Right lobe of liver (tissue), 6 donors: ENCODE measurements at regions of chr9 and their contacts with region 1.

Region 1: GRCh38 chr9:105157130-105157583 is 87.3 kb upstream of the SLC44A1 start:
- DNase-seq: peak; percentile 52 to 69 (median 59)
- ATAC-seq: peak; percentile 88 to 96 (median 91)
- H3K4me3 ChIP-seq: no peak overlapping the region
- H3K27ac ChIP-seq: no peak overlapping the region
- H3K4me1 ChIP-seq: no peaks in the 10 kb centered on the region
- H3K27me3 ChIP-seq: no peaks in the 10 kb centered on the region
- CTCF ChIP-seq: peak; percentile 57 to 60 (median 58)
- POLR2A ChIP-seq: no peak

Region 2: GRCh38 chr9:104863180-104863883 is 293.8 kb before region 1 on chr9:
- intact Hi-C with region 1: loop called in 1 of 2 experiments (anchors 10 kb)
- DNase-seq: no peak
- ATAC-seq: peak; percentile 51 to 62 (median 52)
- H3K4me3 ChIP-seq: no peak overlapping the region
- H3K27ac ChIP-seq: peak overlapping the region; percentile 8 to 52 (median 45)
- H3K4me1 ChIP-seq: peaks cover 0 to 92% (median 34%) of the 10 kb centered on the region in 4 donors
- H3K27me3 ChIP-seq: no peaks in the 10 kb centered on the region
- CTCF ChIP-seq: peak; percentile 67 to 80 (median 68)
- POLR2A ChIP-seq: no peak

Region 3: GRCh38 chr9:104882086-104882485 is 275.1 kb before region 1 on chr9:
- intact Hi-C with region 1: no loop called
- DNase-seq: no peak
- ATAC-seq: no peak
- H3K4me3 ChIP-seq: no peak overlapping the region
- H3K27ac ChIP-seq: no peak overlapping the region
- H3K4me1 ChIP-seq: peaks cover 0 to 22% (median 10%) of the 10 kb centered on the region in 4 donors
- H3K27me3 ChIP-seq: no peaks in the 10 kb centered on the region
- CTCF ChIP-seq: no peak
- POLR2A ChIP-seq: no peak

Region 4: GRCh38 chr9:104934691-104935500 is 222.3 kb before region 1 on chr9:
- intact Hi-C with region 1: loop called in 1 of 2 experiments (anchors 10 kb)
- DNase-seq: no peak
- ATAC-seq: no peak
- H3K4me3 ChIP-seq: no peak overlapping the region
- H3K27ac ChIP-seq: no peak overlapping the region
- H3K4me1 ChIP-seq: peaks cover 0 to 5% (median 0%) of the 10 kb centered on the region in 4 donors
- H3K27me3 ChIP-seq: no peaks in the 10 kb centered on the region
- CTCF ChIP-seq: no peak
- POLR2A ChIP-seq: no peak

Region 5: DNA sequence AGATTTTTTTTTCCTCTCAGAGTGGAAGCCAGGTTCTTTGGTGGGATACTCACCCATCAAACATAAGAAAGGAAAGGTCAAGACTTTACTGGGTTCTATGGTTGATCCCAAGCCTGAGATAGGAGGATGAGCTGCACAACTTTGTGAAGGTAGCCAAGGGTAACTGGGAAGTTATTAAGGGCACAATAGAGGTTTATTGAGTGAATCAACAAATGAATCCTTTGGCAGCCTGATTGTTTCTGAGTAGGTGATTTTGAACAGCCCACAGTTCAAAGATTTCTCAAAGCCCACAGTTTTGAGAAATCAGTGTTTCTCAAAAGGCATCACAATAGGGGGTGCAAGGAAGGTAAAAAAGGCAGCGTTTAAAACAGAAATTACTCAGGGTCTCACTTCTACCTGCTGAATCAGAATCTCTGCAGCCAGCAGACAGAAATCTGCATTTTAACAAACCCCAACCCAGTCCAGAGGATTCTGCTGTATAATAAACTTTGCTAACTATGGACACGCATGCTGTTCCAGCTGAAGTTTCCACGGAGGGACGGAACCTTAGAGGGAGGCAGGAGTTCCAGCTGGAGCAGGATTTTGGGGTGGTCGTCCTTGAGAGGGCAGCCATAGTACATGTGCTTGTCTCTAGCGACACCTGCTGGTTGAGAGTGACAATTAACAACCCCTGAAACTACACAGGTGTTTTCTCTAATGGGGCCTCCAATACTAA is 257.9 kb after region 1 on chr9:
- intact Hi-C with region 1: loop called (anchors 5 to 10 kb)
- DNase-seq: peak in 1 of 3 donors; percentile 59
- ATAC-seq: peak; percentile 29 to 59 (median 38)
- H3K4me3 ChIP-seq: no peak overlapping the region
- H3K27ac ChIP-seq: no peak overlapping the region
- H3K4me1 ChIP-seq: peaks cover 0 to 53% (median 10%) of the 10 kb centered on the region in 4 donors
- H3K27me3 ChIP-seq: no peaks in the 10 kb centered on the region
- CTCF ChIP-seq: peak; percentile 79 to 90 (median 86)
- POLR2A ChIP-seq: no peak

Region 6: DNA sequence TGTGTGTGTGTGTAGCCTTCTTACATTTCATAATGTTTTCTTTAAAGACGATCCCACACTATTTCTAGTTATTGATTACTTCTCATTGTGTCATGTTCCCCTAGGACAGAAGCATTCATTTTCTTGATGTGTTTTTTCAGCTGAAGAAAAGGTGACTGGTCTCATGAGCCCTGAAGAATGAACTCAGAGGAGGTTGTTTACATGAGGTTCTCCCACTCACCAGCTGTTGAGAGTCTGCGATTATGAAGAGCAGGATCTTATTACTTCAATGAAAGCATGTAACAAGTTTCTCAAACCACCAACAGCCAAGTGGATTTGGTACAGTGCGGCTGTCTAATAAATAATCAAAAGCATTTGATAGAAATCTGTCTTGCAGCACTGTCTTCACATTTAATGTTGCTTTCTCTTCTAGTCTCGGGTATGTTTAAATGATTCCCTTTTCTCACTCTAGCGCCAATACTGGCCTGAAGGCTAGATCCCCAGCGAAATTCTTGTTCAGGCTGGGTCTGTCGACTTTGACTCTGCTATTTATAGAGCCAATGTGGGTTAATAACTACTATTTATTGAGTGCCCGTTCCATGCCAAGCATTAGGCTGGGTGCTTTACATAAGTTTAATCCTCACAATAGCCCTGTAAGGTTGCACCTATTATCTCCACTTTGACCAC is 281.1 kb after region 1 on chr9:
- intact Hi-C with region 1: no loop called
- DNase-seq: no peak
- ATAC-seq: peak; percentile 69 to 87 (median 78)
- H3K4me3 ChIP-seq: no peak overlapping the region
- H3K27ac ChIP-seq: peak overlapping the region in 2 of 3 donors; percentile 38 to 47
- H3K4me1 ChIP-seq: peaks cover 0 to 30% (median 5%) of the 10 kb centered on the region in 4 donors
- H3K27me3 ChIP-seq: no peaks in the 10 kb centered on the region
- CTCF ChIP-seq: no peak
- POLR2A ChIP-seq: no peak